Common myeloid progenitor, CD34-positive (primary cell): ENCODE measurements at regions of chr3 and their contacts with region 1.

Region 1: DNA sequence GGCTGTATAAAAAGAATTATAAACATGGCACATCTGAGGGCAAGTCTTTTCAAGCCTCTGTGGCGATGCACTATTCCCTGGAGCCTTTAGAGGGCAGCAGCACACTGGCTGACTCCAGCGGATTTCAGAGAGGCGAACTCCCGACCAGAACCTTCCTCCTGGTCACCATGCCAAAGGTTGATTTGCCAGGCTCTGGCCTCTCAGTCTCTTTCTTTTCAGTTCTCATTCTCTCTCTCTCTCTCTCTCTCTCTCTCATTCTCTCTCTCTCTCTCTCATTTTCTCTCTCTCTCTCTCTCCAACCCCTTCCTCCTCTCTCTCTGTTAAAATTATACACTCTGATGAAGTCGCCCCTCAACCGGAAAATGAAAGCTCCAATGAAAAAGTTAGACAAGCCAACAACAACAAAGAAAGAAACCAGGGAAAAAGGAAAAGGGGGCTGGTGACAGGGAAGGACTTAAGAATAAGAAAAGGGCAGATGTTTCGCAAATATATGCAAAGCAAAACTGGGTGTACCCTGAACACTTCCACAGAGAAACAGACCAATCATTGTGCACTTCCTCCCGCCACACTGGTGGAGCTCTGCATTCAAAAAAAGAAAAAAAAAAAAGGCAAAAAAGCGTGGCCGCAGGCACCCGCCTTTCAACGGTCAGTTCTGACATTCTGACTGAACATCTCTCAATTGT is 90.2 kb downstream of the TIGIT start:
- DNase-seq: peak; percentile 56 to 79 (median 75)
- H3K4me3 ChIP-seq: peak overlapping the region in 5 of 7 experiments; percentile 6 to 65 (median 46)
- H3K27ac ChIP-seq: no peak overlapping the region
- H3K4me1 ChIP-seq: peaks cover 0 to 6% (median 0%) of the 10 kb centered on the region in 4 experiments
- H3K27me3 ChIP-seq: no peaks in the 10 kb centered on the region

Region 2: GRCh38 chr3:114408736-114409670 is 25.0 kb after region 1 on chr3:
- CTCF ChIA-PET with region 1: interaction called, 18 read pairs
- POLR2A ChIA-PET with region 1: no interaction called
- DNase-seq: no peak
- H3K4me3 ChIP-seq: no peak overlapping the region
- H3K27ac ChIP-seq: no peak overlapping the region
- H3K4me1 ChIP-seq: no peaks in the 10 kb centered on the region
- H3K27me3 ChIP-seq: no peaks in the 10 kb centered on the region

Region 3: DNA sequence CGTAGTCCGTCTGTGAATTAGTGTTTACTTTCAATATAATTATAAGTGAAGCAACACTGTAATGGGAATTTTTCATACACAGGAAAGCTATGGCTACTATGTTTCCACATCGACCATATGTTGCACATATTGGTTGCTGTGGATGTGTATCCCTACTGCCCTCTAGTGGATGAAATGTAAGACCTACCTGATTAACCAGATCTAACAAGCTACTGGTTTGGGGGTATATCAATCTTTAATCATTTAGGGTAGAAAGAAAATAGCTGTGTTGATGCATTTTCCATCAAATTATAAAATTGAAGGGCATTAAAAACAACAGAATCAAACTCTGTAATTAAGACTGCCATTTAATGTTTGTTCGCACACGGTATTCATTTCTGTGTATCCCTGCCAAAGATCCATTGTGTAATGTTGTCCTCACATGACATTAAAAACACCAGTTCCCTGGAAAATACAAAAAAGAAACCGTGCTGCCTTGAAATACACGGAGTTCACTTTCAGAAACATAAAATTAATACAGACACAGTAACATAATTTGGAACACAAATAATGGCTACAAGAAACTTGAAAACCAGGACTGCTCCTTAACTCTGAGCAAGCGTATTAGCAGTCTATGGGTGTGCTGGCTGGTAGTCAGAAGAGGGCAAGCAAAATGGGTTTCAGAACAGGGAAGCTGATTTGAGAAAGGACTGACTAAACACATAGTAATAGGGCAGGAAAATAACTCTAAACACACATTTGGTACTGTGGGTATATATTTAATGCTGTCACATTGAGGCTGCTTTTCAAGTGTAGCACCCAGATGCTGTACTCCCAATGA is 34.9 kb after region 1 on chr3:
- CTCF ChIA-PET with region 1: interaction called, 24 read pairs
- POLR2A ChIA-PET with region 1: no interaction called
- DNase-seq: peak; percentile 66 to 79 (median 79)
- H3K4me3 ChIP-seq: no peak overlapping the region
- H3K27ac ChIP-seq: no peak overlapping the region
- H3K4me1 ChIP-seq: peaks cover 0 to 2% (median 0%) of the 10 kb centered on the region in 4 experiments
- H3K27me3 ChIP-seq: peaks cover 0 to 2% (median 0%) of the 10 kb centered on the region in 5 experiments

Region 4: DNA sequence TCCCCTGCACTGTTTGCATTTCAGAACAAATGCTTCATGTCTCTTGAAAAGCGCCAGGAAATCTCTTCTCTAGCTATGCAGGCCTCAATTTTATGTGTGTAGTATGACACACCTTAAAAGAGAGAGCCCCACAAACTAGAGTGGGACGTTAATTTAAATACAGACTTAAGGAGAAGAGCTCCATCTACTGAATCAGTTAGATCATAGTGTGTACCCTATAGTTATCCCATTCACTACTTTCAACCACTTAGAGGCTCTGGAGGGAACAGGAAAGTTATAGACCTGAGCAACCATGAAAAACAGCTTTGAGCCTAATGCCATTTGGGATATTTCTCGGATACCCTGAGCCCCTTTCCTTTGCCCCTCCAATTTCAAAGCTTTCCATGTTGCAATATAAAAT is 63.5 kb after region 1 on chr3:
- CTCF ChIA-PET with region 1: no interaction called
- POLR2A ChIA-PET with region 1: no interaction called
- DNase-seq: no peak
- H3K4me3 ChIP-seq: no peak overlapping the region
- H3K27ac ChIP-seq: no peak overlapping the region
- H3K4me1 ChIP-seq: peaks cover 0 to 9% (median 2%) of the 10 kb centered on the region in 4 experiments
- H3K27me3 ChIP-seq: no peaks in the 10 kb centered on the region

Region 5: DNA sequence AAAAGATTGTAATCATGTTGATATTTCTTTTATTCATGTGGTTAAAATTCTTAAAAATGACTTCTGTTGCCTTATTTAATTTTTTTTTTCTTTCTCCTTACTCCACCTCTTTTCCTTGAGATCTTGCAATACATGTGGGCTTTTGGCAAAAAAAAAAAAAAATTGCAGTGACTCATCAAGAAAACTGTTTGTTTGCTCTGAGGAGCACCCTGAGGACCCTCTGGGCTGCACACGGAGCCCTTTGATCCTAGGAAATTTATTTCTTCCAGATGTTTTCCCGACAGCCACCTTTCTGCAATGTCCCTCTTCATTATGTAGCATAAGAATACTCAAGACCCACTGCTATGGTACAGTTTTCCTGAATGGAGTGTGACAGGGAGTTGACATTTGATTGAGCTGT is 391.4 kb after region 1 on chr3:
- CTCF ChIA-PET with region 1: no interaction called
- POLR2A ChIA-PET with region 1: no interaction called
- DNase-seq: peak in 2 of 3 donors; percentile 33 to 49
- H3K4me3 ChIP-seq: no peak overlapping the region
- H3K27ac ChIP-seq: no peak overlapping the region
- H3K4me1 ChIP-seq: no peaks in the 10 kb centered on the region
- H3K27me3 ChIP-seq: no peaks in the 10 kb centered on the region